ENCODE measurements at regions of chr18 and their contacts with region 1.

Region 1: DNA sequence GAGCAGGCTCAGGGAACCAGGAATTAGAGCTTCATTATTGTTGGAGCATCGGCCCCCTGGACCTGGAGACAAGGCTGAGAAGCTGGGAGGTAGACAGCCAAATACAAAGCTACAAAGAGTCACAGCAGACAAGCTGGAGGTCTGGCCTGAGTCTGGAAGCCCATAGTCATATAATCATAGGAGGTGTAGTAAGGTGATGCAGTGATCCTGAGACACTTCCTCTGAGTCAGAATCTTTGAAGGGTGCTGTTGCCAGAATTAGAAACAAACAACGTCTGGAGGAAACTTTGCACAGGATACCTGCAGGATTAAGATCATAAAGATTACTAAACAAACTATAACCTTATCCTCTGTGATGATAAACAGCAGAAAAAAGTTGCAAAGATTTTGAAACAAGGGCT is 213.8 kb downstream of the DSC3 start:
- DNase-seq: no peak
- H3K4me3 Mint-ChIP-seq: no peak overlapping the region
- H3K27ac Mint-ChIP-seq: no peak overlapping the region
- H3K4me1 Mint-ChIP-seq: no peaks in the 10 kb centered on the region
- H3K27me3 Mint-ChIP-seq: no peaks in the 10 kb centered on the region

Region 2: GRCh38 chr18:30712383-30712782 is 116.3 kb before region 1 on chr18:
- CTCF ChIA-PET with region 1: no interaction called
- intact Hi-C with region 1: no loop called
- DNase-seq: no peak
- H3K4me3 Mint-ChIP-seq: no peak overlapping the region
- H3K27ac Mint-ChIP-seq: no peak overlapping the region
- H3K4me1 Mint-ChIP-seq: no peaks in the 10 kb centered on the region
- H3K27me3 Mint-ChIP-seq: no peaks in the 10 kb centered on the region

Region 3: DNA sequence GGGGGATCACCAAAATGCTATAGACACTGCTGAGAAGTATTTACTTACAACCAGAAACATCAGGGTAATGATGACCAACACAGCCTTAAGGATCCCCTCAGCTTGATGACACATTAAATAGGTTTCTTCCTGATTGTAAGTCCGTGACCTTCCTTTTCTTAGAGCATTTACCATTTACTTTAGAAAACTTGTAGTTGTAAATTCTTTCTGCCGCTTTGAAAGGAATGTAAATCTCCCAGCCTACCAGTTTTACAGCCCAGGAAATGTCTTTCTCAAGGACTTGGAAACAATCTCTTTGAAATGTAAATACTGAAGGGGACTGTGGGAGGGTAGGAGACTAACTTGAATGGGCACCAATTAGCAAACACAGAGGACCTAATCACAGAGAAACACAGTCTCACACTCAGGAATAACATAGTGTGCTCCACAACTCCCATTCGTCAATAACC is 64.8 kb before region 1 on chr18:
- CTCF ChIA-PET with region 1: no interaction called
- intact Hi-C with region 1: loop called (anchors 10 kb)
- DNase-seq: no peak
- H3K4me3 Mint-ChIP-seq: no peak overlapping the region
- H3K27ac Mint-ChIP-seq: no peak overlapping the region
- H3K4me1 Mint-ChIP-seq: no peaks in the 10 kb centered on the region
- H3K27me3 Mint-ChIP-seq: no peaks in the 10 kb centered on the region

Region 4: DNA sequence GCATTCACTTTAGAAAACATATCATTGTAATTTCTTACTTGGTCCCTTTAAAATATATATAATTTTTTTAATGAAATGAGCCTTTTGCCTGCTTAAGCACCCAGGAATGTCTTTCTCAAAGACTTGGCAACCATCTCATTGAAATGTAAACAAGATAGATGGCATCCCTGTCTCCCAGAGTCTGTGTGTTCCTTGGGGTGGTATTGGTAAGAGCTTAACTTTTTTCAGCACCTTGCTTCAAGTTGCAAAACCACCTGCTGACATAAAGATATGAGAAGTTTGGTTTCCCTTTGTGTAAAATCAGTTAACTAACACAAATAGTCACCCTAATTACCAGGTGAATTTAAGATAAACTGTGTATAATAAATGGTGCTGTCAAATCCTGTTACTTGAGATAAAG is 53.1 kb before region 1 on chr18:
- CTCF ChIA-PET with region 1: no interaction called
- intact Hi-C with region 1: no loop called
- DNase-seq: no peak
- H3K4me3 Mint-ChIP-seq: no peak overlapping the region
- H3K27ac Mint-ChIP-seq: no peak overlapping the region
- H3K4me1 Mint-ChIP-seq: no peaks in the 10 kb centered on the region
- H3K27me3 Mint-ChIP-seq: no peaks in the 10 kb centered on the region

Measured in activated naive CD4-positive, alpha-beta T cell treated with anti-CD3 and anti-CD28 coated beads for 36 hours (primary cell).